Mammary epithelial cell (primary cell): ENCODE measurements at regions of chr6 and their contacts with region 1.

Region 1: GRCh38 chr6:108782179-108783041 is 65.8 kb upstream of the ARMC2 start:
- DNase-seq: peak; percentile 84
- H3K4me3 ChIP-seq: peak overlapping the region; percentile 45 to 52 (median 47)
- H3K27ac ChIP-seq: peak overlapping the region; percentile 26
- H3K4me1 ChIP-seq: peaks cover 23% of the 10 kb centered on the region
- H3K27me3 ChIP-seq: no peaks in the 10 kb centered on the region
- CTCF ChIP-seq: peak; percentile 76 to 88

Region 2: DNA sequence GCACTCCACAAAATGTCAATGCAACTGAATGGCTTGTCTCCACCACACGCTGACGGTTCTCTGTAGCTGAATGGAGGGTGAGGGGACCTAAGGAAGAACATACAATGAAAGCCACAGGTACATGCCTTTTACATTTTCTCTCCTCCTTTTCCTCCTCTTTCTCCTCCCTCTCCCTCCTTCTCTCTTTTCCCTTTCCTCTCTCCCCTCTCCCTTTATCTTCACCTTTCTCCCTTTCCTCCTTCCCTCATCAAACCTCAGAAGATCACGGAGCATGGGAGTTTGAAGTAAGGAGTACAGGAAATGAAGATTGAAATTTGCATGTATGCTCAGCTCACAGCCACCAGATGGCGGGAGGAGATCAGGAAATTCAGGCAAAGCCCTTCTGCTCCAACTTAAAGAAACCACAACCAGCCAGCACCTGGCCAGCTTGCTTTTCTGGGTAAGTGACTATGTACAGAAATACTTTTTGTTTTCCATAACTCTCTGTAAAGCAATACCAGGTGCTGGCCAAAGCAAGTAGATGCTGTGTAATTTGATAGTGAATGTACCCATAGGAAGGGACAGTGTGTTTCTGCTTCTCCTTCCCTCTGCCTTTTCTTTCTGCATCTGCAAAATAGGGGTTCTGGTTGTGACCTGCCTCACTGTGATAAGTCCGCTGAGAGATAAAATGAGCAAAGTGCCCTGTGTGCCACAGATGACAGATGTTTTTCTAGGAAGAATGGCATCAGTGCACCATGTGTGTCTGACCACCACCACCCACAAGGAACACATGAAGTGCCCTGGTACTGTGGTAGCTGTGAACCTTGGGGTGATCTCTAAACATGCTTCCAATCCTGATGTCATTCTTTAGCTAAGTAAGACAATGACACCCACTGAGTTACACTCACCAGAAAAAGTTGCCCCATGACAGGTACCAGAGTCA is 240.3 kb before region 1 on chr6:
- CTCF ChIA-PET with region 1: no interaction called
- dilution Hi-C with region 1: no loop called
- in situ Hi-C with region 1: no loop called
- intact Hi-C with region 1: loop called (anchors 1 kb)
- DNase-seq: peak; percentile 67
- H3K4me3 ChIP-seq: no peak overlapping the region
- H3K27ac ChIP-seq: no peak overlapping the region
- H3K4me1 ChIP-seq: no peaks in the 10 kb centered on the region
- H3K27me3 ChIP-seq: no peaks in the 10 kb centered on the region
- CTCF ChIP-seq: peak; percentile 76 to 85

Region 3: GRCh38 chr6:108565893-108566292 is 216.5 kb before region 1 on chr6:
- CTCF ChIA-PET with region 1: no interaction called
- dilution Hi-C with region 1: loop called (anchors 5 kb)
- in situ Hi-C with region 1: loop called in 1 of 2 experiments (anchors 5 kb)
- intact Hi-C with region 1: no loop called
- DNase-seq: peak; percentile 52
- H3K4me3 ChIP-seq: no peak overlapping the region
- H3K27ac ChIP-seq: peak overlapping the region; percentile 56
- H3K4me1 ChIP-seq: peaks cover 39% of the 10 kb centered on the region
- H3K27me3 ChIP-seq: no peaks in the 10 kb centered on the region
- CTCF ChIP-seq: no peak

Region 4: DNA sequence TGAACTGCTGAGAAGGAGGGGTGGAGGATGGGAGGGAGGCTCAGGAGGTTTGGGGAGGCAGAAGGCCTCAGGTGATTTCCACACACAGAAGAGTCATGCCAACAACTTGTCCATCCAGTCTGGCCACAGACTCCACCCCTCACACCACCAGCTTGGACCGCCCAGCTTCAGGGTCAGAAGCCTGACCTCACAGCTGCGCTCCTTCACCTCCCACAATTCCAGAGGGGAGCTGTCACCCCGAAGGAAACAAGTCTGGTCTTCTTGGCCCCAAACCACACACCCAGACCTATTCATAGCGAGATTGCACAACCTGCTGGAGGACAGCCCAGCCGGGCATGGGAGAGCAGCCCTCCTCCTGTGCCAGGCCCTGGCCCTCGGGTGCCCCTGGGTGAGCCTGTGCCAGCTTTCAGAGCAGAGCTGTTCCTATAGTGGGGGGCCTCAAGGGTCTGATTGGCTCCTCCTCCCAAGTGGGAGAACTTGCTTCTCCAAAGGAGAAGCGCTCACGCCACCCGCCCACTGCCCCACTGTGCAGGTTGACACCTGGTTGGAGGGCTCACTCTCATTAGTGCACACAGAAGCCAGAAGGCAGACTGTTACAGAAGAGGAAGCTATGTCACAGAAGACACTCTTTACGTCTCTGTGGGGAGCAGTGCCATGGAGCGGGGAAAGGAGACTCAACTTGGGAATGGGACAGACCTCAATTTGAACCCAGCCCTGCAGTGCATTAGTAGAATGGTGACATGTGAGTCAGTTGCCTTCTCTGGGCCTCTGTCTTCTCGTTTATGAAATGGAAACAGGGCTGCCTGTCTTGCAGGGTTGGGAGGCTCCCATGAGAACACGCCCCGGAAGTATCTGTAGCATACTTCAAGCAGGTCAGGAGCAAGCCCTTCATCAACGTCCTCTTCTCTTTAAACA is 92.9 kb before region 1 on chr6:
- CTCF ChIA-PET with region 1: no interaction called
- dilution Hi-C with region 1: loop called (anchors 5 kb)
- in situ Hi-C with region 1: no loop called
- intact Hi-C with region 1: loop called (anchors 2 kb)
- DNase-seq: peak; percentile 100
- H3K4me3 ChIP-seq: no peak overlapping the region
- H3K27ac ChIP-seq: peak overlapping the region; percentile 79
- H3K4me1 ChIP-seq: peaks cover 57% of the 10 kb centered on the region
- H3K27me3 ChIP-seq: no peaks in the 10 kb centered on the region
- CTCF ChIP-seq: peak in 1 of 2 donors; percentile 1

Region 5: DNA sequence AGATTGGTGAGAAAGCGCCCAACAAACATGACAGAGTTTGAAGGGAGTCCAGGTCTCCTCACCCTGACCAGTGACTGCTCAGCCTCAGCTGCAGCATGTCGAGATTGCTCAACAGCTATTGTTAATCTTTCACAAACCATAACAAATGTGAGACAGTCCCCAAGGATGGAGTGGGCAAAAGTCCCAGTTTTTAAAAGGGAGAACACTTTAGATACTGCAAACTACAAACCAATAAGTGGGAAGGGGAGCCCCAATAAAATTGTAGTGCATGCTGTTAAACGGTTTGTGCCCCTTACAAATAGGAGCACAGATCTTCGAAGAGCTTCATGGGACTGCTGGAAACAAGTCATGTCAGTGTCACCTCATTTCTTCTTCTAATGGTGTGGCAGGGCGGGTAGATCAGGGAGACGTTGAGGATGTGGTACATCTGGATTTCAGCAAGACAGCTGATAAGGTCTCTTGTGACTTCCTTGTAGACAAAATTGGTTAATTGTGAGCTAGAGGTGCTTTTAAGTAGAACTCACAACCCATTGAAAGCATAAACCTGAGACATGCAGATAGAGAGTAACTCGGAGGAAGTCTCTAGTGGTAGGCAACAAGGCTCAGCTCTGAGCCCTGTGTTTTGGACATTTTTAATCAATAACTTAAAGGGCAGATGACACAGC is 68.2 kb before region 1 on chr6:
- CTCF ChIA-PET with region 1: no interaction called
- dilution Hi-C with region 1: loop called (anchors 5 kb)
- in situ Hi-C with region 1: loop called in 1 of 2 experiments (anchors 10 kb)
- intact Hi-C with region 1: no loop called
- DNase-seq: no peak
- H3K4me3 ChIP-seq: no peak overlapping the region
- H3K27ac ChIP-seq: no peak overlapping the region
- H3K4me1 ChIP-seq: peaks cover 7% of the 10 kb centered on the region
- H3K27me3 ChIP-seq: no peaks in the 10 kb centered on the region
- CTCF ChIP-seq: no peak

Region 6: GRCh38 chr6:108835218-108835850 is 52.9 kb after region 1 on chr6:
- CTCF ChIA-PET with region 1: no interaction called
- dilution Hi-C with region 1: no loop called
- in situ Hi-C with region 1: no loop called
- intact Hi-C with region 1: loop called (anchors 1 kb)
- DNase-seq: peak; percentile 42
- H3K4me3 ChIP-seq: no peak overlapping the region
- H3K27ac ChIP-seq: no peak overlapping the region
- H3K4me1 ChIP-seq: peaks cover 20% of the 10 kb centered on the region
- H3K27me3 ChIP-seq: no peaks in the 10 kb centered on the region
- CTCF ChIP-seq: peak; percentile 82 to 91

Region 7: DNA sequence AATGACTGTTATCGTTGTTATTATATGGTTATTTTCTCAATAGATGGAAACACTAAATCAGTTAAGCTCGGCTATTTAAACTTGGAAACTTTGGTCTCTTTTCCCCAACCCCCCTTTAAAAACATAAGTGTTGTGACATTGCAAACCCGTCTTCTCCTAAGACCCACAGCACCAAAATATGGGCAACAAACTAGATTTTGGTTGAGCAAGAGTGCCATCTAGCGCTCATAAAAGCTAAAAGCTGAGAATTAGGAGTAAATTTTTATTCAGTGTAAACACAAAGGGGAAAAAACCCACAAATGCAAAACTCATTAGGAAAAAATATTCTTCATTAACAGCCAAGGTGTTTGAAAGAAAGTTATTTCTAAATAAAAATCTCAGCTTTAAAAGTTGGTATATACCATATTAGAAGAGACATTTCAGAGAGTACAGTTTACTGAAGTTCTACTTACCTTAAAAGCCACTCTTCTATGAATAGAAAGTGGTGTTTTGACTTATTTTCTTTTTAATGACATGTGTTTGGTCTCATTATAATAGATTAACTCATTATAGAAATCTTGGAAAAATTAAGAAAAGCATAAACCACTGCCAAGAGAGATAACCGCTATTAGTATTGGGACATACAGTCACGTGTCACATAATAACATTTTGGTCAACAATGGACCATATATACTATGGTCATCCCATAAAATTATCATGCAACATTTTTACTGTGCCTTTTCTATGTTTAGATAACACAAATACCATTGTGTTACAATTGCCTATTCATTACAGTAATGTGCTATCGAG is 291.1 kb after region 1 on chr6:
- CTCF ChIA-PET with region 1: no interaction called
- dilution Hi-C with region 1: no loop called
- in situ Hi-C with region 1: no loop called
- intact Hi-C with region 1: loop called (anchors 1 kb)
- DNase-seq: peak; percentile 53
- H3K4me3 ChIP-seq: no peak overlapping the region
- H3K27ac ChIP-seq: no peak overlapping the region
- H3K4me1 ChIP-seq: peaks cover 3% of the 10 kb centered on the region
- H3K27me3 ChIP-seq: no peaks in the 10 kb centered on the region
- CTCF ChIP-seq: peak; percentile 55 to 65

Region 8: GRCh38 chr6:109187399-109188114 is 405.1 kb after region 1 on chr6:
- CTCF ChIA-PET with region 1: no interaction called
- dilution Hi-C with region 1: no loop called
- in situ Hi-C with region 1: no loop called
- intact Hi-C with region 1: no loop called
- DNase-seq: peak; percentile 16
- H3K4me3 ChIP-seq: no peak overlapping the region
- H3K27ac ChIP-seq: no peak overlapping the region
- H3K4me1 ChIP-seq: no peaks in the 10 kb centered on the region
- H3K27me3 ChIP-seq: peaks cover 2% of the 10 kb centered on the region
- CTCF ChIP-seq: peak; percentile 88 to 98